ENCODE measurements at regions of chr2 and their contacts with region 1.

Region 1: DNA sequence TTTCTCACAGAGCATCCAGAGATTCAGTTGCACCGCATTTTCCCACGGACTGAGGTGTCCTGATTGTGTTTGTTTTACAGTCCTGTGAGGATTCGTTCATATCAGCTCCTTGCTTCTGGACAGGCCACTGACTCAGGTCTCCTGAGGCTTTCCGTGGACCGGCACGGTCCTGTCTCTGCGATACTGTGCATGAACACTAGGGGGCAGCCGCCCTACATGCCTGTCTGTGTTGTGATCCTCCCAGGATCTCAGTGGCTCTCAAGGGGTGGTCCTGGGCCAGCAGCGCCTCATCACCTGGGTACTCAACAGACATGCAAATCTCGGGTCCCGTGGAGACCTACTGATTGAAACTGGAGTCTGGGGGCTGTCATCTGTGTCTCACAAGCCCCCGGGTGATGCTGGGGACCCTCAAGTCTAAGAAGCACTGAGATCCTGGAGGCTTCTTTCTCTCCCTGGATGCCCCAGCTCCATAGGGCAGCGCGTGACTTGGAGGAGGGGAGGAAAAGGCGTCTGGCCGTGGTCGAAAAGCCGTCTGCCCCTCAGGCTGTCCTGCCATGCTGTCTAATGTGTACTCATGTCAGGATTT is 28.9 kb downstream of the IL1R2 start:
- DNase-seq: peak; percentile 88 to 94 (median 90)
- H3K4me3 ChIP-seq: no peak overlapping the region
- H3K27ac ChIP-seq: peak overlapping the region in 1 of 2 donors; percentile 18
- H3K4me1 ChIP-seq: peaks cover 0 to 5% (median 0%) of the 10 kb centered on the region in 3 donors
- H3K27me3 ChIP-seq: no peaks in the 10 kb centered on the region
- CTCF ChIP-seq: peak; percentile 99

Region 2: DNA sequence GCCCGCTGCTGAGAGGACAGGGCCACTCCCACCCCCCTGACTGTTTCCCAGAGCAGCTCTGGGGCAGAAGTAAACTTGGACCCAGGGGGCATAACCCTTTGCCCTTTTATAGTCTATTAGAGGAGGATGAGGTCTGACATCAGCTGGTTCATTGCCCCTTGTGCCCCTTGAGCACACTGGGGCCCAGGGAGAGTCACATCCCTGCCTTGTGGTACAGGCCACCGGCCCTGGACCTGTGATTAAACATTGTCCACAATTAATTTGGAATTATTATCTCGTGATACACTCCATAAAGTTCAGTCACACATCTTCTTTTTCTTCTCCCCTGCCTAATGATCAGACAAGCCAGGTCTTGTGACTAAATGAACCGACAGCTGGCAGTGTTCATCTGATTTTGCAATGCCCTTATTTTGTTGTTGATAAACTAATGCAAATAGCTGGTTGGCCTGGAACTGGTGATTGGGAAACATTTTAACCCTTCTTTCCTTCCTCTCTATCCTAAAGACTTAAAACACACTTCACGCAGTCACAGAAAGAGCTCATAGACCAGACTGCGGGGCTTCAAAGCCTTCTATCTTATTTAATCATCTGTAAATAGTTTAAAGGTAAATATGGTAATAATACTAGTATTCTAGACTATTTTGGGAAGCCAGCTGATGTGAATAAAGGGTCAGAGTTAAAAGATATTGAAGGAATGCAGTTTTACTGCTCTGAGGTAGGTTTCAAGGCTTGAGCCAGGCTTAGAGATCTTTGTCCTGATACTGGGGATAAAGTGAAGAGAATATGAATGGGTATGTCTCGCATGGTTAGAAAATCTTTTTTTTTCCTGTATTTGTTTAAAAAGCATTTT is 135.2 kb after region 1 on chr2:
- intact Hi-C with region 1: loop called (anchors 10 kb)
- DNase-seq: peak in 3 of 5 donors; percentile 14 to 79 (median 23)
- H3K4me3 ChIP-seq: no peak overlapping the region
- H3K27ac ChIP-seq: peak overlapping the region; percentile 47 to 92
- H3K4me1 ChIP-seq: peaks cover 0 to 18% (median 15%) of the 10 kb centered on the region in 3 donors
- H3K27me3 ChIP-seq: no peaks in the 10 kb centered on the region
- CTCF ChIP-seq: no peak

Region 3: GRCh38 chr2:102235491-102235890 is 214.8 kb after region 1 on chr2:
- intact Hi-C with region 1: loop called (anchors 10 kb)
- DNase-seq: no peak
- H3K4me3 ChIP-seq: no peak overlapping the region
- H3K27ac ChIP-seq: no peak overlapping the region
- H3K4me1 ChIP-seq: peaks cover under 1 to 7% (median 4%) of the 10 kb centered on the region in 3 donors
- H3K27me3 ChIP-seq: no peaks in the 10 kb centered on the region
- CTCF ChIP-seq: peak; percentile 27

Measured in kidney (tissue), 22 donors.